Calu3 (cell line): ENCODE measurements at regions of chr17 and their contacts with region 1.

Region 1: DNA sequence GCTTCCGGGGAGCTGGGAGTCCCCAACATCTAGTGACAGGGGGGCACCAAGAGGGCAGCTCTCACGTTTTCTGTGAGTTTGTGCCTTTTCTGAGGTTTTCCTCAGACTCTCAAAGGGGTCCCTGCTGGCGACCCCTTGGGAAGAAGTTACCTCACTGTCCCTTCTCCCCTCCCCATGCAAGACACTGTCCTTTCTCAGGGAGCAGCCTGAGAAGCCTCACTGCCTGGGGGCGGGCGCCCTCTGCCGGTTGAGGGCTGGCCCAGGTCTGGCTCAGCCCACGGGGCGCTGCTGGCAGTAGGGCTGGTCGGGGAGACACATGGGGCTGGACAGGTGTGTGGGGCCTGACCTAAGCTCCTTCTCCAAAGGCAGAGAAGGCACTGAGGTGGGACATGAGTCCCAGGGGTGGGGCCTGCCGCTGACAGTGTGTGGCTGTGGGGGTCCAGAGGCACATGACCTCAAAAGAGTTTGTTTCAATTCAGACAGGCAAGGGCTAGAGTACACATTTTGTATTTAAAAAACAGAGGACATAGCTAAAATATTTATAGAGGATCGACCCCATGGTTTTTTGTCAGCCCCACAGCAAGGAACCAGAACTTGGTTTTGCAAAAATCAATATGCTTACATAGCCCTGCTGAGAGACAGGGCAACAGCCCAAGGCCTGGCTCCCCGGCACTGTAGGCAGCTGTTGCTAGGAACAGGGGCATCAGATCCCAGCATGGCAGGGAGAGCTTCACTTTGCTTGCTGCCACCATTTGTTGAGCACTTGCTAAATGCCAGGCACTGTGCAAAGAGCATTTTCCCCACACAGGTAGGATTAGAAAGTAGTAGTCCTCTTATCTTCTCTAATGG is 18.5 kb upstream of the ALDH3A1 start:
- DNase-seq: peak; percentile 80
- H3K4me3 Mint-ChIP-seq: no peak overlapping the region
- H3K27ac Mint-ChIP-seq: no peak overlapping the region
- H3K4me1 Mint-ChIP-seq: no peaks in the 10 kb centered on the region
- H3K27me3 Mint-ChIP-seq: no peaks in the 10 kb centered on the region
- CTCF ChIP-seq: peak; percentile 73

Region 2: GRCh38 chr17:19362277-19363113 is 404.2 kb before region 1 on chr17 and contains the start of gene B9D1:
- CTCF ChIA-PET with region 1: interaction called, 8 read pairs
- intact Hi-C with region 1: loop called (anchors 10 kb)
- DNase-seq: peak; percentile 83
- H3K4me3 Mint-ChIP-seq: peak within 1 kb of the TSS; percentile 70
- H3K27ac Mint-ChIP-seq: peak within 1 kb of the TSS; percentile 60
- H3K4me1 Mint-ChIP-seq: peaks cover 9% of the 10 kb centered on the region
- H3K27me3 Mint-ChIP-seq: no peaks in the 10 kb centered on the region
- CTCF ChIP-seq: peak; percentile 74
- total RNA-seq, gene B9D1: 14.1 and 15.6 TPM in 2 replicates

Region 3: DNA sequence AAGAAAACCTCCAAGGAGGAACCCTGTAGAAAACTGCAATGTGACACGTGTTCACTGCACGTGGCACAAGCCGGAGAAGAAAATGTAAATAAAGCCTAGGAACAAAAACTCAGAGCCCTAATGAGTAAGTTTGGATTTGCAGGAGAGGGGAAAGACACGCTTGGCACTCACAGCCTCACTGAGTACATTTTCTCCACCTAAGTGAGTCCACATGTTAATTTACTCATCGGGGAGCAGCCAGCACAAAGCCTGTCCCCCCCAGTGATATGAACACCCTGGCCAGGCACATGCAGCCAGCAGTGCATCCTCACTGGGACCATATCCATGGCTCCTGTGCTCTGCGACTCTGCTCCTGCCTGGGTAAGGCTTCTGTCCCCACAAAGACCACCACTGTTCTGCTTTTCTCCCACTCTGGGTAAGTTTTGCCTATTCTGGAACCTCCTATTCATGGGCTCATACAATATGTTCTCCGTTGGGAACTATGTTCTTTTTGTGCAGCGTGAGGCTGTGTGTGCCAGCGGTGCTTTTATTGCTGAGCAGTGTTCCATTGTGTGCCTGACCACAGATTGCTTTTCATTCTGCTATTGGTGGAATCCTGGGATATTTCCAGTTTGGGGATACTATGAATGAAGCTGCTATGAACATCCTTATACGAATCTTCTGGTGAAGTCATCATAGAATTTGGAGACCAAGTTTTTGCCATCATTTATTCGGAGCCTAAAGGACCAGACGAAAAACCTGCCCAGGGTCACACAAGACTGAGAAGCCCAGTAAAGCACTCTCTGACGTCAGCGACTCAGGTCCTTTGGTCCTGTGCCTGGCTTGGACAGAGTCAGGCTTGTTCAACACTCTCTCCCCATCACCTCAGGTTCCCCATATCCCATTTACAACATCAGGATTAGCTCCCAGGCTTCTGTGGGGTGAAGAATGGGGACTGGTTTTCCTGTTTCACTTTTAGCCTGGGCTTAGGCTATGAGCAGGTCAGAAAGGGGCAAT is 302.3 kb before region 1 on chr17:
- CTCF ChIA-PET with region 1: no interaction called
- intact Hi-C with region 1: no loop called
- DNase-seq: no peak
- H3K4me3 Mint-ChIP-seq: no peak overlapping the region
- H3K27ac Mint-ChIP-seq: no peak overlapping the region
- H3K4me1 Mint-ChIP-seq: no peaks in the 10 kb centered on the region
- H3K27me3 Mint-ChIP-seq: peaks cover 6% of the 10 kb centered on the region
- CTCF ChIP-seq: no peak

Region 4: DNA sequence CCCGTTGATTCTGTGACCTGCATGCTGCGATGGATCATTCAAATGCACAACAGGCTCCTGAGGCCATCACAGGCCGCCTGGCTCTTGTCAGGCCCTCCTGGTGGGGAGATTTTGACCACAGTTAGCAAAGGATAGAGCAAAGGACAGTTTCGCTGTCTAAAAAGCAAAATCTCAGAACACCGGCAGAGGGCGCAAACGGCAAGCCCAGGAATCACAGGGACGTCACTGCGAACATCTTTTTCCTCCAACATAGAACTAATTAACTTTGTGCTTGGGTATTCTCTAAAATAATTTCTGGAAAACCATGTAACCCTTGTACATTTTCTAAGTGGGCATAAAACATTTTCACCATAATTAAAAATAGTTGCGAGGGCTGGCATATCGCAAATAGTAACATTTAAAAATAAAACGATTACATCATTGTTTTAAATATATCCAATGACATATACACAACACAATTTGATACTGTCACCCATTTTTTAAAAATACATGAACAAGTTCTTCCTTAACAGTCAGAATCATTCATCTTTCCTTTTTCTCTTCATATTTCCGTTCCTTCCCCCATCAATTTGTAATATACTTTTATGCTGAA is 252.7 kb before region 1 on chr17:
- CTCF ChIA-PET with region 1: interaction called, 3 read pairs
- intact Hi-C with region 1: loop called (anchors 1 kb)
- DNase-seq: peak; percentile 58
- H3K4me3 Mint-ChIP-seq: no peak overlapping the region
- H3K27ac Mint-ChIP-seq: no peak overlapping the region
- H3K4me1 Mint-ChIP-seq: peaks cover 11% of the 10 kb centered on the region
- H3K27me3 Mint-ChIP-seq: no peaks in the 10 kb centered on the region
- CTCF ChIP-seq: peak; percentile 72

Region 5: DNA sequence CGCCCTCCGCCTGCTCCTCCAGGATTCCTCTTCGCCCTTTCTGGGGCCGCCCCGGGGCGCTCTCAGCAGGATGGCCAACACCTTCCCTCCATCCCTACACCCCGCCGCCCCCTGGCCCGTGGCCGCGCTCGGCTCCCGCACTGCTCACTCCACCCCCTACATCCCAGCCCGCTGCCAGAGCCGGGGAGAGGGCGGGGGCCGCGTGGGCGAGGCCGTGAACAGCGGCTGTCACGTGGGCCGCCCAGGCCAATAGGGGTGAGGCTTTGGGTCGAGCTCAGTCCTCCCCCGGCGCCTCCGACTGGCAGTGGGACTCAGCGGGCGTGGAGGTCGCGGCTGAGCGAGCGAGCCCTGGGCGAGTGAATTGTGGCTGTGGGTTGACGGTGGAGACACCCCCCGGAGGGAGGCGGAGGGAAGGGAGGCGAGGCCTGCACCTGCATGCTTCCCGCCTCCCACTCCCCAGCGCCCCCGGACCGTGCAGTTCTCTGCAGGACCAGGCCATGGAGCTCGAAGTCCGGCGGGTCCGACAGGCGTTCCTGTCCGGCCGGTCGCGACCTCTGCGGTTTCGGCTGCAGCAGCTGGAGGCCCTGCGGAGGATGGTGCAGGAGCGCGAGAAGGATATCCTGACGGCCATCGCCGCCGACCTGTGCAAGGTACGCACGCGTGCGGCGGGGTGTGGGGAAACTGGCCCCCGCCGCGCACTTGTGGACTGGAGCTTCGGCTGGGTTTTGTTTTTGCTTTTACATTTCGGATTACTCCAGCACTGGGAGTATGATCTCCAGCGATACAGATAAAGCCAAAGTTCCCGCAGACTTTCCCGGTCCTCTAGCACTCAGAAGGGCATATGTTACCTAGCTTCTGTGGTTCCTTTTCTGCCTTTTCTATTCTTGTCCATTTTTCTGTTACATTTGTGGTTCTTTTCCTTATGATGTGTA is 117.9 kb before region 1 on chr17 and contains the start of gene ALDH3A2:
- CTCF ChIA-PET with region 1: interaction called, 9 read pairs
- intact Hi-C with region 1: loop called (anchors 5 kb)
- DNase-seq: peak; percentile 92
- H3K4me3 Mint-ChIP-seq: peak within 1 kb of the TSS; percentile 75
- H3K27ac Mint-ChIP-seq: peak within 1 kb of the TSS; percentile 86
- H3K4me1 Mint-ChIP-seq: peaks cover 37% of the 10 kb centered on the region
- H3K27me3 Mint-ChIP-seq: no peaks in the 10 kb centered on the region
- CTCF ChIP-seq: no peak
- total RNA-seq, gene ALDH3A2: 32.4 and 38.0 TPM in 2 replicates

Region 6: DNA sequence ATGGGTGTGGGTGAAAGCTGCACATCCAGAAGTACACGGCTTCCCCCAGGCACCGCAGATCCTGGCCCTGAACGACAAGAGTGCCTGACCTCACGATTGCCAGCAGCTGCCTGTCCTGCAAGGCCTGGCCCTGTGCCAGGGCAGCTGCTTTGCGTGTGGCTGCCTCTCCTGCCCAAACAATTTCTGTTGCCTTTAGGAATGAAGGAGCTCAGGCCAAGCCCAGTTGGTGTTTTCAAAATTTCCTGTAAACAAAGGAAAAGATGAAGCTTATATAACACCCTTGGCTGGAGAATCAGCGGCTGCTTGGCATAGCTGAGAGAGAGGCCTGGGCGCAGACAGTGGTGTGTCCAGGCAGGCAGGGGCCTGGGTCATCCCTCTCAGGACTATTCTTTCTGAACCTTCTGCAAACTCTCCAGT is 38.6 kb before region 1 on chr17:
- CTCF ChIA-PET with region 1: interaction called, 10 read pairs
- intact Hi-C with region 1: no loop called
- DNase-seq: peak; percentile 54
- H3K4me3 Mint-ChIP-seq: no peak overlapping the region
- H3K27ac Mint-ChIP-seq: no peak overlapping the region
- H3K4me1 Mint-ChIP-seq: peaks cover 8% of the 10 kb centered on the region
- H3K27me3 Mint-ChIP-seq: no peaks in the 10 kb centered on the region
- CTCF ChIP-seq: no peak

Region 7: GRCh38 chr17:19753049-19753444 is 13.6 kb before region 1 on chr17:
- CTCF ChIA-PET with region 1: interaction called, 11 read pairs
- intact Hi-C with region 1: no loop called
- DNase-seq: peak; percentile 79
- H3K4me3 Mint-ChIP-seq: no peak overlapping the region
- H3K27ac Mint-ChIP-seq: peak overlapping the region; percentile 72
- H3K4me1 Mint-ChIP-seq: peaks cover 31% of the 10 kb centered on the region
- H3K27me3 Mint-ChIP-seq: no peaks in the 10 kb centered on the region
- CTCF ChIP-seq: no peak

Region 8: DNA sequence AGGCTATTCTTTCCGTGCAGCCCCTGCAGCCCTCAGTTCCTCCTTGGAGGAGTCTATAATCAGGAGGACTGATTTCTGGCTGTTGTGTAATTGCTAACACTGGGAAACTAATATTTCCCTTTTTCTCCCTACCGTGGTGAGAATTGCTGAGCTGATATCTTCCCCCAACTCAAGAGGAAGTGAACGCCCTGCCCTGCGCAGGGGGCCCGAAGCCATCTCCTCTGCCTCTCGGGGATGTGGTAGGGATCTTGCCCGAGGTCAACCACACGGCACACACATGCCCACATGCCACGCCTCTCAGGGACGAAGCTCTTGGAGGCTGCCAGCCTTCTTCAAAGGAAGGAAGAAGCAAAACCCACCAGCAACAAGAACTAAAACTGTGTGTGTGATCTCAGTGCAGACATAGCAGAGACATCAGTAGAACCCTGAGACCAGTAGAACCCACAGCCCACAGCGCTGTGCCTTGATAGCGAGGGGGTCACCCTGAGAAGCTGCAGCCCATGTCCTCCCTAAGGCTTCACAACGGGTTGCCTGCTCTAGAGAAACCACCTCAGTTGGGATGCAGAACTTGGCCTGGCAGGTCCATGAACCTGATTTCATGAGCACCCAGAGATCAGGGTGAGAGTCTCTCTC is 110.0 kb after region 1 on chr17:
- CTCF ChIA-PET with region 1: no interaction called
- intact Hi-C with region 1: no loop called
- DNase-seq: no peak
- H3K4me3 Mint-ChIP-seq: no peak overlapping the region
- H3K27ac Mint-ChIP-seq: no peak overlapping the region
- H3K4me1 Mint-ChIP-seq: no peaks in the 10 kb centered on the region
- H3K27me3 Mint-ChIP-seq: peaks cover 13% of the 10 kb centered on the region
- CTCF ChIP-seq: no peak